ENCODE measurements at regions of chr14 and their contacts with region 1.

Region 1: GRCh38 chr14:51908086-51908485 is 47.7 kb downstream of the GNG2 start:
- DNase-seq: no peak
- H3K4me3 Mint-ChIP-seq: no peak overlapping the region
- H3K27ac Mint-ChIP-seq: peak overlapping the region; percentile 36
- H3K4me1 Mint-ChIP-seq: peaks cover 47% of the 10 kb centered on the region
- H3K27me3 Mint-ChIP-seq: no peaks in the 10 kb centered on the region

Region 2: DNA sequence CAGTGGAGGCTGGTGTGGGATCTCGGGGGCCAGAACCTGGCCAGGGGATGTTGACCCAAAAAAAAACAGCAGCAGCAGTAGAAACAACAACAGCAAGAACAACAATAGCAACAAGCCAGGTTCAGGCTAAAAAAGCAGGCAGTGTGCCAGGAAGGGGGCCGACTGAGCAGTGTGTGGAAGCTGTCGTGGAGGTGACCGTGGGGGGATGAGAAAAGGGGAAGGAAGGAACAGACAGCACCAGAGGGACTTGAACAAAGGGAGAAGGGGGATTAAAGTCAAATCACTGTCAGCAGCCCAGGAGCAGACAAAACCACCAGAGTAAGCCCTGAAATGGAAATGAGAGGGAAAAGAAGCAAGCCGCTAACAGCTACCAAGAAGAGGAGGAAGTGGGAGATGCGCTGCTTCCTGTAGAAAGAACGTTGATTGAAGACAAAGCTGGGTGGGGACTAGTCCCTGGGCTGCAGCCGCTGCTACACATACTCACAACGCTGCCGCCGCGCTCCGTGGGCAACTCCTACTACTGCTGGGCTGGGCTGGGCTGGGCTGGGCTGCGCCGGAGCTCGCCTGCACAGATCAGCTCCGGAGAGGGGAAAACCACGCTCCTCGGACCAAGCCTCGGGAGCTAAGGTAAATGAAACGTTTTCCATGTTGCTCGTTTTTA is 47.8 kb before region 1 on chr14 and contains the start of gene GNG2:
- intact Hi-C with region 1: loop called (anchors 1 kb)
- DNase-seq: peak; percentile 77
- H3K4me3 Mint-ChIP-seq: peak within 1 kb of the TSS; percentile 95
- H3K27ac Mint-ChIP-seq: peak within 1 kb of the TSS; percentile 88
- H3K4me1 Mint-ChIP-seq: peaks cover 63% of the 10 kb centered on the region
- H3K27me3 Mint-ChIP-seq: peaks cover 2% of the 10 kb centered on the region
- total RNA-seq, gene GNG2: 126 and 128 TPM in 2 replicates

Region 3: DNA sequence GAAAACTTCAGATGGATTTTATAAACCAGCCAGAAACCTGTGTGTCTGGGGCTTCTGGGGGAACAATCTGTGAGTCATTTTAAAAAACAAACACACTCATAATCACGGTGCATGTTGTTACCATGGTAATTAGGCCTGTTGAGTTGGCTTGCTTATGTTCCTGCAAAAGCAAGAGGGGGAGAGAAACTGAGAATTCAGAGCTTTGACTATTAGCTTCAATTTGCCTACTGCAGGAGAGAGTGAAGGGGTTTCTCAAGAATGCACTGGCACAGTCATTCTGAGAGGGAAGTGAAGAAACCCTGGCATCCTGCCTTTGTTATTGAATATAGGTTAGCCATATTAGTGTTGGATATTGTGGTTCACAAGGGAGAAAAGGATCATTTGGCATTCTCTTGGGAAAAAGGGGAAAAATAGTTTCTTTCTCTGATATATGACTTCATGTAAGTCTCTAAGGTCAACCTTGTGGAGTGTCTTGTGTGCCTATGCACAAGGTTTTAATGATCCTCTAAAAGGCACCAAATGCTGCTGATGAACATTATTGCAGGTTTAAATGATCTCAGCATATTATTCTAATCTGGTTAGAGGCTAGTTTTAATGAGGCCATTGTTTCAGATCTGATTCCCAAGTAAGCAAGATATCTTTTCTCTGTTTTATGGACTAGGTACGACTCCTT is 34.7 kb before region 1 on chr14:
- intact Hi-C with region 1: loop called (anchors 1 kb)
- DNase-seq: peak; percentile 24
- H3K4me3 Mint-ChIP-seq: peak overlapping the region; percentile 59
- H3K27ac Mint-ChIP-seq: peak overlapping the region; percentile 80
- H3K4me1 Mint-ChIP-seq: peaks cover 63% of the 10 kb centered on the region
- H3K27me3 Mint-ChIP-seq: no peaks in the 10 kb centered on the region

Region 4: GRCh38 chr14:51884086-51884927 is 23.8 kb before region 1 on chr14:
- intact Hi-C with region 1: loop called (anchors 1 kb)
- DNase-seq: no peak
- H3K4me3 Mint-ChIP-seq: peak overlapping the region; percentile 67
- H3K27ac Mint-ChIP-seq: peak overlapping the region; percentile 75
- H3K4me1 Mint-ChIP-seq: peaks cover 60% of the 10 kb centered on the region
- H3K27me3 Mint-ChIP-seq: no peaks in the 10 kb centered on the region

Region 5: DNA sequence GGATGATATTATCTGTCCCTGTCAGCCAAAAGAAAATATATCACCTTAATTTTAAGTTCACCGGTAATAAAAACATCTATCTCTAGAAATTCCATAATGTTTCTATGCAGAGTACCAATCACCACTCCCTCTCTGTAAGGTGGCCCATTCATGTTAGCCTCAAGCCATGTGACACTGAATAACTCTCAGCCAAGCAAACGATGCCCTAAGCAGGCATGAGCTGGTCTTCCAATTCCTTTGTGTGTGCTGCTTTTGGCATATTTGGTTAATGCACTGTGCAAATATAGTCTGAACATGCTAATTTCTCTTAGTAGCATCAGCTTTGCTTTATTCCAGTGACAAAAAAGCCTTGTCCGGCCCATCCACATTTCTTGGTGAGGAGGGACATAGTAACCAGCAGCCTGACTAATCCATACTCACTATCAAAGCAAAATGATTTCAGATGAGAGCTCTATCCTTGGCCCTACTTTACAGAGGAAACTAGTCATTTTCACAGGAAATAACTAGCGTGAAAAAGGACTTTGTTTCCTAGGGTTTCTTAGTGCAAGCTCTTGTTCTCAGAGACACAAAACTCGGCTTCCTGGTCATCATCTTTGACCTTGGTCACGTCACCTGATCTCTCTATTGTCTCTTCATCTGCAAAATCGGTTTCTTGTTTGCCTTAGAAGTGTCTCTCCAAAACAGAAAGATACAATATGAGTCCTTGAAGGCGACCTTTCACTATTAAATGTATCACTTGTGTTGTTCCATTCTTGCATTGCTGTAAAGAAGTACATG is 22.0 kb after region 1 on chr14:
- intact Hi-C with region 1: loop called (anchors 2 kb)
- DNase-seq: no peak
- H3K4me3 Mint-ChIP-seq: no peak overlapping the region
- H3K27ac Mint-ChIP-seq: peak overlapping the region; percentile 91
- H3K4me1 Mint-ChIP-seq: peaks cover 54% of the 10 kb centered on the region
- H3K27me3 Mint-ChIP-seq: no peaks in the 10 kb centered on the region

Region 6: GRCh38 chr14:51979088-51979709 is 71.1 kb after region 1 on chr14:
- intact Hi-C with region 1: loop called (anchors 5 kb)
- DNase-seq: peak; percentile 70
- H3K4me3 Mint-ChIP-seq: no peak overlapping the region
- H3K27ac Mint-ChIP-seq: no peak overlapping the region
- H3K4me1 Mint-ChIP-seq: peaks cover 22% of the 10 kb centered on the region
- H3K27me3 Mint-ChIP-seq: peaks cover 2% of the 10 kb centered on the region

Region 7: DNA sequence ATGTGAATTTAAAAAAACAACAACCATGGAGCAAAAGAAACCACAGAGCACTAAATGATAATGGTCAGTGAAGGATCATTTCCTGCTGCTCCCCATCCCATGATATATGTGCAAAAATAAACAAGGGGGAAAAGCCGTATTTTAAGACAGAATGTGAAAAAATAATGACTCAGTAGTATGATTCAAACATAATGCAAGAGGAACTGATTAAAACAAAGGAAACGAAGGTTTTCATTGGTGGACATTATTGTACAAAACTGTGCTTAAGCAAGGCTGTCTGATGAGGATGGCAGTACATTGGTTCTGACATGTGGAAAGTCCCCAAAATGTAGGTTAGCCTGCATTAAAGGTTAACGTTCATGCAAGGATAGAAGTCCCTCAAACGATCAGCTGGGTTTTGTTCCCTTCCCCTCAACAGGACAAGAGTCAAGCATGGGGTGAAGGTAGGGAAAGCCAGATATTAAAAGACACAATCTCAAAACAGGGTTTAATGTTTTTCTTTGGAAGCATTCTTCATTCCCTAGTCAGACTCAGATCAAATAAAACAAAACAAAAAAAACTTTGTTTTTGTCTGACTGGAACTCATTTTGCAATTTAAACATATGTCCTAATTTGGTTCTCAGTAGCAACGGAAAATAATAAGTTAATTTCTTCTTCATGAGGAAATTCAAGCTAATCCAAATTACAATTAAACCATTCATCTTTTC is 333.2 kb after region 1 on chr14:
- intact Hi-C with region 1: no loop called
- DNase-seq: no peak
- H3K4me3 Mint-ChIP-seq: no peak overlapping the region
- H3K27ac Mint-ChIP-seq: no peak overlapping the region
- H3K4me1 Mint-ChIP-seq: no peaks in the 10 kb centered on the region
- H3K27me3 Mint-ChIP-seq: peaks cover 6% of the 10 kb centered on the region

Measured in activated T-helper 1 cell treated with anti-CD3 and anti-CD28 coated beads, Interleukin-12 subunit alpha, Interleukin-12 subunit beta, Interleukin-2, Interleukin-4 antibody, amounts not matched to agents 30 ng/mL and 10 ng/mL and 1 ng/mL, durations not matched to agents 14 hours and 24 hours and 36 hours (primary cell).